Head of caudate nucleus (tissue), 42 donors: ENCODE measurements at regions of chr19 and their contacts with region 1.

Region 1: DNA sequence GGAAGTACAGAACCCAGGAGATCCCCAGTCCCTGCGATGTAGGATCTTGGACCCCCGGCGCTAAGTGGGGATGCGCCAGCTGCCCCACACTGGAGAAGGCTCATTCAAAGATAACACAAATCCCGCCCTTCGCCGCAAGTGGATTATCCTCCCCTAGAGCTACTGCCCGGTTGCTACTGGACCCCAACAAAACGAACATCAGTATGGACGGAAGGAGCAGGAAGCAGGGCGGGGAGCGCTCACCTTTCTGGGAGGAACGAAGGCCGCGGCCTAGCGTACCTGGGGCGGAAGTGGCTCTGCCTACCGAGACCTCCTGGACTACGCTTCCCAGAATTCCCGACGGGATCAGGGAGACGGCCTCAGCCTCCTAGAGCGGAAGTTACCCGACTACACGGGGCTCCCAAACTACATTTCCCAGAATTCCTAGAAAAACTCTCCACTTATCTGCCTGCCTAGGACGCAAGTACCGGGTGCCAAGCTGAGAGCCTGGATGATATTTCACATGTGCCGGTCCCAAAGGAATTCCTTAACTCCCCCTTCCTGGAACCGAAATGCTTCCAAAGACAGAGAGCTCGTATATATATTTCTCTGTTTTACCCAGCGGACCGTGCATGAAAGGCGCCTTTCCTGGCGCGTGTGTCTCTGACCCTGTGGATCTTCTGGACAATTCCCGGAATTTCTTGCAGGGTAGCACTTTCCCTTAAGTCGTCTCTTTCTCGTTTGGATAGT is at the start of gene ZNF112:
- DNase-seq: peak; percentile 82 to 98 (median 94)

Region 2: DNA sequence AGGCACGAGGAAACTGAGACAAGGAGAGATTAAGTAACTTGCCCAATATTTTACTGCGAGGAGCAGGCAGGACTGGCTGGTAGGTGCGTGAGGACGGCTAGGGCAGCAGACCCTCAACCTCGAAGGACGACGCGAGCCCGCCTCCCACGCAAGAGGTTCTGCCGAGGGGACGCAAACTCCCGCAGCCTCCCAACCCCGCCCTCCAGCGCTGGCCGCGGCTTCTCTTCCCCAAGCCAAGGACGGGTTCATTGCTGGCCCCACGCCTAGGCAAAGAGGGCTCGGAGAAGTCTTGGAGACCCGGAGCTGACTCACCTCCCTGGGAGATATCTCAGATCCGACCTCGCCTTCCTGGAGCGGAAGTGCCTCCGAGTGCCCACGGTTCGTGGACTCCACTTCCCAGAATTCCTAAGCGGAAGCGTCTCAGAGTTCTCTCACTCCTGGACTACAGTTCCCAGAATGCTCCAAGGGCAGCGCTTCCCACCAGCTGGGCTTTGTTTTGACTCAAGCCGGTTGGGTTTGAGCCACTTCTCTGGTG is 51.8 kb before region 1 on chr19 and contains the start of gene ZNF235:
- intact Hi-C with region 1: loop called (anchors 5 kb)
- DNase-seq: peak; percentile 80 to 98 (median 94)

Region 3: GRCh38 chr19:44401139-44402115 is 44.9 kb after region 1 on chr19 and contains the start of gene ZNF285:
- intact Hi-C with region 1: no loop called
- DNase-seq: peak; percentile 77 to 98 (median 92)